ENCODE measurements at regions of chr15 and their contacts with region 1.

Region 1: DNA sequence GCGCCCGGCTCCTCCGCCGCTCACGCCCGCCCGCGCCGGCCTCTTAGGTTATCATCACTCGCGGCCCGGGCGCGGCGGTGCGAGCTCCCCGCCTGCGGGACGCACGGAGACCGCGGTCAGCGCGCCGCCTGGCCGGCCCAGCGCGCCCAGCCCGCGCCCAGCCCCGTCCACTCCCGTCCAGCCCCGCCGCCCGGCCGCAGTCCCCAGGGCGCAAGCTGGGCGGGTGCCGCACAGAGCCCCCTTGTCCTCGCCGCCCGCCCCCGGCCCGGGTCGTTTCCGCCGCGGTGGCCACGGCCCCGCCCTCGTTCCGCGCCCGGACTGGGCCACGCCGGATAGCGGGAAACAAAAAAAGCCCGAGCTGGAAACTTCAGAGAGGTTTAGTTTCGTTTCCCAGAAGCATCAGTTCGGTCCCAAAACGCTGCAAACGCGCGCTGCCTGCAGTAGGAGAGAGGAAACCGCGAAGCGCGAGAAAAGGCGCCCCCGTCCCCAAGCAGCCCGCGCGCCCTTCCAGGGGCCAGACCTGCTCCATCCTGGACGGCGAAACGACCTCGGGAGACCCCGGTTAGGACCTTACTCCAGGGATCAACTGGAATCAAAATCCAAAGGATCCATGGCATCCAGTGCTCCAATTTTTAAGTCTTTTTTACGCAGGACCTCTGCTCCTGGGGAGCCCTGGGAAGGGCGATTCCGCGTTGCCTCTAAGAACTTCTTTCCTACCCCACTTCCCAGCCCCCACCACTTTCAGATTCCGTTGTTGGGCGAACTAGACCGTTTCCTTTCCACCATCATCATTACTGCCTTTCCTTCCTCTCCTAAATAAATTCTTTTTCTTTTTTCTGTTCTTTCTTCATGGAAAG is at the start of gene ATP10A:
- DNase-seq: no peak
- H3K4me3 ChIP-seq: peak within 1 kb of the TSS; percentile 43 to 84 (median 62)
- H3K27ac ChIP-seq: peak within 1 kb of the TSS; percentile 53 to 88 (median 83)
- H3K4me1 ChIP-seq: peaks cover 12 to 51% (median 17%) of the 10 kb centered on the region in 3 donors
- H3K27me3 ChIP-seq: peaks cover 0 to 42% (median 0%) of the 10 kb centered on the region in 4 donors
- CTCF ChIP-seq: no peak
- POLR2A ChIP-seq: no peak
- total RNA-seq, gene ATP10A: 0.88 to 6.3 (median 1.9) TPM

Region 2: GRCh38 chr15:25739687-25740121 is 123.6 kb before region 1 on chr15:
- intact Hi-C with region 1: loop called (anchors 5 kb)
- DNase-seq: no peak
- H3K4me3 ChIP-seq: no peak overlapping the region
- H3K27ac ChIP-seq: no peak overlapping the region
- H3K4me1 ChIP-seq: peaks cover 0 to 27% (median 2%) of the 10 kb centered on the region in 3 donors
- H3K27me3 ChIP-seq: no peaks in the 10 kb centered on the region
- CTCF ChIP-seq: peak in 4 of 6 experiments; percentile 13 to 25 (median 16)
- POLR2A ChIP-seq: no peak

Region 3: GRCh38 chr15:25793354-25794050 is 69.8 kb before region 1 on chr15:
- intact Hi-C with region 1: no loop called
- DNase-seq: no peak
- H3K4me3 ChIP-seq: no peak overlapping the region
- H3K27ac ChIP-seq: no peak overlapping the region
- H3K4me1 ChIP-seq: peaks cover 4 to 64% (median 23%) of the 10 kb centered on the region in 3 donors
- H3K27me3 ChIP-seq: no peaks in the 10 kb centered on the region
- CTCF ChIP-seq: no peak
- POLR2A ChIP-seq: no peak